ENCODE measurements at regions of chrX and their contacts with region 1.

Region 1: DNA sequence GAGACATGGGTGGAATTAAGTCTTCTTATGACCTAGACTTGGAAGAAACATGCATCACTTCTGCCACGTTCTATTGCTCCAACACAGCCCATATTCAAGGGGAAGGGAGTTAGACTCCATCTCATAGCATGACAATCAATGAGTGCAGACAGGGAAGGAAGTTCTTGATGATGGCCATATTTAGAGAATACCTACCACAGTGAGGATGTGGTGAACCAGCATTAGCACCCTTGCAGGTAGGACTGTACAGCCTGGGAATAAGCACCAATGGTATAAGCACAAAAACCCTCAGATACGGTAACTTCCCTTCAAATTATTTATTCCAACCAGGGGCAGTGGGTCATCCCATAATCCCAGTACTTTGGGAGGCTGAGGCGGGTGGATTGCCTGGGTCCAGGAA is 29.8 kb downstream of the PAGE2 start:
- DNase-seq: peak; percentile 4
- H3K4me3 ChIP-seq: no peak overlapping the region
- H3K27ac ChIP-seq: peak overlapping the region; percentile 42
- H3K4me1 ChIP-seq: peaks cover 33% of the 10 kb centered on the region
- H3K27me3 ChIP-seq: no peaks in the 10 kb centered on the region
- CTCF ChIP-seq: no peak
- POLR2A ChIP-seq: no peak

Region 2: DNA sequence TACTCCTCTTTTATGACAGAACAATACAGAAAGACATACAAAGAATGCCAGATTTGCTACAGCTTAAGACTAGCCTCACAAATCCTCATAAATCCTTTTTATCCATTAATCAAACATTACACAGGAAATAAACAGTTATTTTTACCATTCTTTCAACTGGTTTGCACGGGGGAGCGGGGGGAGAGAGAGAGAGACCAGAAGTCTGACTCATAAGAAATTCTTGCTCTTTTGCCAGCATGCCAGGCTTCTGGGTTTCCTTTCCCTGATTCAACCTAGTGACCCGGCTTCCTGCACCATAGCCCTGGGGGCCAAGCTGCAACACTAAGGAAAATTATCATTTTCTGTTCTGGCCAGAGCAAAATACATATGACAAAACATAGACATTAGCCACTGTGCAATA is 592.1 kb after region 1 on chrX:
- CTCF ChIA-PET with region 1: no interaction called
- POLR2A ChIA-PET with region 1: no interaction called
- dilution Hi-C with region 1: no loop called
- intact Hi-C with region 1: loop called (anchors 1 kb)
- DNase-seq: peak; percentile 86
- H3K4me3 ChIP-seq: no peak overlapping the region
- H3K27ac ChIP-seq: peak overlapping the region; percentile 76
- H3K4me1 ChIP-seq: peaks cover 39% of the 10 kb centered on the region
- H3K27me3 ChIP-seq: no peaks in the 10 kb centered on the region
- CTCF ChIP-seq: no peak
- POLR2A ChIP-seq: peak; percentile 36

Measured in endothelial cell of umbilical vein (primary cell).